ENCODE measurements at regions of chr4 and their contacts with region 1.

Region 1: GRCh38 chr4:183444214-183445066 is at the start of gene CDKN2AIP:
- DNase-seq: peak; percentile 94
- ATAC-seq: peak; percentile 90
- H3K4me3 Mint-ChIP-seq: peak within 1 kb of the TSS; percentile 94
- H3K27ac Mint-ChIP-seq: peak within 1 kb of the TSS; percentile 96
- H3K4me1 Mint-ChIP-seq: peaks cover 43% of the 10 kb centered on the region
- H3K27me3 Mint-ChIP-seq: no peaks in the 10 kb centered on the region
- total RNA-seq, gene CDKN2AIP: 27.6 to 30.2 TPM

Region 2: DNA sequence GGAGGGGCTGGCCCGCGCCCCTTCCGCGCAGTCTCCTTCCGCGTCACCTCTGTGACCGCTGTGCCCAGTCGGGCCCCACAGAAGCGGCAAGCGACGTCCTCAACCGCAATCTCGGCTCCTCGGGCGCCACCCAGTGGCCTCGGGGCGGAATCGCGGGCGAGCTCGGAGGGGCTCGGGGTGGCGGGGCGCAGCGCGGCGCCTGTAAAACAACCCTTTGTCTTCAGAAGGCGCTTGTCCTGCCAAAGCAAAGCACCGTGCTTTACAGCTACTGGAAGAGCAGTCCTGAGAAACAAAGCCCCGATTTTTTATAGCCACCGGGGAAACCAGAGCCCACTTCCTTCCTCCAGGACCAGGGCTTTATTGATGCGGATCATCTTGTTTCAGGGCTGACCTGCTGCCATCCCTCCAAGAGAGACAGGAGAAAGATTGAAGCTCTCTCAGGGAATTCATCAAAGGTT is 37.3 kb before region 1 on chr4:
- CTCF ChIA-PET with region 1: interaction called, 6 read pairs
- POLR2A ChIA-PET with region 1: interaction called, 14 read pairs
- DNase-seq: peak; percentile 92
- ATAC-seq: peak; percentile 96
- H3K4me3 Mint-ChIP-seq: peak overlapping the region; percentile 71
- H3K27ac Mint-ChIP-seq: peak overlapping the region; percentile 86
- H3K4me1 Mint-ChIP-seq: peaks cover 16% of the 10 kb centered on the region
- H3K27me3 Mint-ChIP-seq: peaks cover 5% of the 10 kb centered on the region

Region 3: DNA sequence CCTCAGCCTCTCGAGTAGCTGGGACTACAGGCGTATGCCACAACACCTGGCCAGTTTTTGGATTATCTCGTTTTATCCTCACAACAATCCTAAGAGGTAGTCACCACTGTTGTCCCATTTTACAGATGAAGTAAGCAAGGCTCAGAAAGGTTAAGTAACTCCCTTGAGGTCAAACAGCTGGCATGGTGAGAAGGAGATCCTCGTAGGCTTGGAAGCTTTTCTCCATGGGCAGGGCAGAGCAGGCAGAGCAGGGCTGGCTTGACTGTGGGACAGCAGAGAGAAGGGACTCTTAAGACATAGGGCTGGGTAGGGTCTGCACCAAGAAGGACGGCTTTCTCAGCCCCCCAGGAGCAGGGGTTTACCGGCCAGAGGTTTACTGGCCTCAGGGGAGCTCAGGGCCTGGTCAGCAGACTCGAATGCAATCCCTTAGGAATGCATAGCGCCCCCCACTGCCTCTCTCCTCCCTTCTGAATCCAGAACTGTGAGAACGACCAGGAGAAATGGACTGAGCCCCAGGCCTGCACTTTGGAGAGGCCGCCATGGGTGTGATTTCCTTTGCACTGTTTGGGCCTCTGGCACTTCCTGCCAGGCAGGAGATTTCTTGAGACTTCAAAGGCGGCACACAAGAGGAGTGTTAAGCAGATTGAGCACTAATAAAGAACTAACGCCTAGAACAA is 14.0 kb before region 1 on chr4:
- CTCF ChIA-PET with region 1: interaction called, 11 read pairs
- POLR2A ChIA-PET with region 1: interaction called, 28 read pairs
- DNase-seq: peak; percentile 57
- ATAC-seq: peak; percentile 93
- H3K4me3 Mint-ChIP-seq: no peak overlapping the region
- H3K27ac Mint-ChIP-seq: peak overlapping the region; percentile 82
- H3K4me1 Mint-ChIP-seq: peaks cover 33% of the 10 kb centered on the region
- H3K27me3 Mint-ChIP-seq: no peaks in the 10 kb centered on the region

Region 4: DNA sequence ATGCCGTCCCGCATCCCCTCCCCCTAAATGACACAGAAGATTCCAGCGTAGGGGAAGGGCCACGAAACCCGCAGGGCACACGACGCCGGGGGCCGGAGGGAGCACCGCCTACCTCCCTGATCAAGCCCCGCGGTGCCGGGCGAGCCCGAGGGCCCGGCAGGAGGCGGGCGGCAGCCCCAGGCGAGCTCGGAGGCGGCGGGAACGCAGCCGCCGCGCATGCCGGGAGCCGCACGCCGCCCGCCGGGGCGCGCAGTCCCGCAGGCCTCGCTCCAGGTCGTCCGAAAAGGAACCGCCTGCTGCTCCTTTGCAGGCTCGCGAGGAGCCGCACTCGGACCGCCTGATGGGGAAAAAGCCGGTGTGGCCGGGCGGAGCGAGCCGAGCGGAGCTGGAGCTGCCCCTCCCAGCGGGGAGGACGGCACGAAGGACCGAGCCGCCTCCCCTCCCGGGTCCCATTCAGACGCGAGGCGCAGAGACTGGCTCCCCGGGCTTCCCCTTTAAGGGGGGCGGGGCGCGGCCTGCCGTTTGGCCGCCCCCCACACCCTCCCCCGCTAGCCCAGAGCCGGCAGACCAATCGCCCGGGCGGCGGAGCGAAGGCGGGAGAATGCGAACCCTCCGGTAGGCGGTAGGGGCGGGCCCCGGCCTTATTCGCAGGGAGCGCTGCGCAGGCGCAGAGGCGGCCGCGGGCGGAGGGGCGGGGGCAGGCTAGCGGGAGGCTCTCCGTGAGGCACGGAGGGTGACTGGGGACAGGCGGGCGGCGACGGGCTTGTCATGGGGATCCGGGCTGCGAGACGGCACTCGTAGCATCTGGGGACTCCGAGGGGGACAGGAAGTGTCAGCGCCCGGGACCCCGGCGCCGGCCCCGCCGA is 59.9 kb after region 1 on chr4:
- CTCF ChIA-PET with region 1: interaction called, 3 read pairs
- POLR2A ChIA-PET with region 1: interaction called, 43 read pairs
- DNase-seq: peak; percentile 99
- ATAC-seq: peak; percentile 82
- H3K4me3 Mint-ChIP-seq: peak overlapping the region; percentile 93
- H3K27ac Mint-ChIP-seq: peak overlapping the region; percentile 98
- H3K4me1 Mint-ChIP-seq: peaks cover 38% of the 10 kb centered on the region
- H3K27me3 Mint-ChIP-seq: no peaks in the 10 kb centered on the region

Measured in activated CD8-positive, alpha-beta T cell treated with anti-CD3 and anti-CD28 coated beads, Interleukin-2, amount 10 ng/mL, durations not matched to agents 7 days and 5 days (primary cell).